ENCODE measurements at regions of chr15 and their contacts with region 1.

Region 1: DNA sequence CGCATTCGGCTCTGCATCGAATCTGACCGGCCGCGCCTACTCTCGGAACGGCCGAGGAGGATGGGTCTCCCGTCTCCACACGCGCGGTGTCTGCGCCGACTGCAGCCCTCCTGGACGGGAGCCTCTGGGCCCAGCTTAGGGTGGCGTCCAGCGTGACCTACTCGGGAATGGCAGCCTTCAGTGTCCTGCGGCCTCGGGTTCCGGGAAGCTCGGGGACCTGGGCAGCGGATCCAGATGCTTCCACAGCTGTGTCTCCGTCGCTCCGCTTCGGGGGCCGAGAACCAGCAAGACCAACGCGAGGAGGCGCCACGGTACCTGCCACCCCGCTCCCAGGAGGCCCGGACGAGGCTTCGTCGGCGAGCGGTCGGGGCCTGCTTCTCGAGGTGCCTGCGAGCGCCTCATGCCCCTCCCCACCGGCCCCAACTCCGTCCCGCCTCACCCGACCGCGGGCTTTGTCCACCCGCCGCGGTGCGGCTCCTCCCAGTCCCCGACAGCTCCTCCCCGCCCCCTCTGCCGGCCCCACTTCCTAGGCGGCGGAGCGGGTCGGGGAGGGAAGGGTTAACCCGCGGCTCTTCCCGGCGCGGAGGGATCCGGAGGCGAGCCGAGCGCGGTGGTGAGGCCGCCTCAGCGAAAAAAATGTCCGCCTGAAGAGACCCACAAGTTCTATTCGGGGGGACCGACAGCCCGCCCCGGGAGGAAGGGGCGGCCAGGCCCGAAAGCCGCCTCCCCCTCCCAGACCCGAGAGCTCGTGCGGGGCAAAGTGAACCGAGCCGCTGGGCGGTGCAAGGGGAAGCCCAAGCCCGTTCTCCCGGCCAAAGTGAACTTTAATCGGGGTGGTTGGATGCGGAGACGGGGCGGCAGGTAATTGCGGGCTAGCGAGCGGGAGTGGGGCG is at the start of gene TCF12:
- DNase-seq: peak; percentile 90
- H3K4me3 Mint-ChIP-seq: peak within 1 kb of the TSS; percentile 96
- H3K27ac Mint-ChIP-seq: peak within 1 kb of the TSS; percentile 93
- H3K4me1 Mint-ChIP-seq: peaks cover 29% of the 10 kb centered on the region
- H3K27me3 Mint-ChIP-seq: no peaks in the 10 kb centered on the region
- total RNA-seq, gene TCF12: 65.7 to 70.7 TPM

Region 2: GRCh38 chr15:56732921-56733797 is 185.1 kb before region 1 on chr15 and contains the start of gene ZNF280D:
- CTCF ChIA-PET with region 1: no interaction called
- intact Hi-C with region 1: loop called (anchors 1 kb)
- DNase-seq: peak; percentile 76
- H3K4me3 Mint-ChIP-seq: peak within 1 kb of the TSS; percentile 86
- H3K27ac Mint-ChIP-seq: peak within 1 kb of the TSS; percentile 86
- H3K4me1 Mint-ChIP-seq: peaks cover 31% of the 10 kb centered on the region
- H3K27me3 Mint-ChIP-seq: no peaks in the 10 kb centered on the region
- total RNA-seq, gene ZNF280D: 13.7 to 16.8 TPM

Region 3: DNA sequence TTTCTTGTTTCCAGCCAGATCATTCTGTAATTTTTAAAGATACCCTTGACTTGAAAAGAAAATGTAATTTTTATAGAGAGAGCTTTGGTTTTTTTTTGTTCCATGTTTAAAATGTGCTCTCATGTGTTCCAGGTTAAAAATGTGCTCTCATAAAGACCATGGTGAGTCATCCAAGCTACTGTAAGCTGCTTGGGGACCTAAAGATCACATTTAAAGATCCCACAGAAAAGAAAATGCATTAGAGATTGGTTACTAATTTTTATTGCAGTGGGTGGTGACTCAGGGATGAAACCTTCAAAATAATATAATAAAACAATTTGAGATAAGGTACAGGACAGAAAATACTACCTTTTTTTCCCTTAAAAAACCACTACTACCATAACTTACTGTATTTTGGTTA is 11.1 kb after region 1 on chr15:
- CTCF ChIA-PET with region 1: interaction called, 8 read pairs
- intact Hi-C with region 1: loop called (anchors 1 kb)
- DNase-seq: no peak
- H3K4me3 Mint-ChIP-seq: no peak overlapping the region
- H3K27ac Mint-ChIP-seq: no peak overlapping the region
- H3K4me1 Mint-ChIP-seq: peaks cover 72% of the 10 kb centered on the region
- H3K27me3 Mint-ChIP-seq: no peaks in the 10 kb centered on the region

Region 4: GRCh38 chr15:56984681-56985481 is 66.6 kb after region 1 on chr15:
- CTCF ChIA-PET with region 1: no interaction called
- intact Hi-C with region 1: loop called (anchors 2 kb)
- DNase-seq: no peak
- H3K4me3 Mint-ChIP-seq: no peak overlapping the region
- H3K27ac Mint-ChIP-seq: no peak overlapping the region
- H3K4me1 Mint-ChIP-seq: peaks cover 59% of the 10 kb centered on the region
- H3K27me3 Mint-ChIP-seq: no peaks in the 10 kb centered on the region

Region 5: GRCh38 chr15:57133127-57133968 is 215.1 kb after region 1 on chr15:
- CTCF ChIA-PET with region 1: interaction called, 3 read pairs
- intact Hi-C with region 1: loop called (anchors 5 kb)
- DNase-seq: peak; percentile 42
- H3K4me3 Mint-ChIP-seq: no peak overlapping the region
- H3K27ac Mint-ChIP-seq: no peak overlapping the region
- H3K4me1 Mint-ChIP-seq: peaks cover 45% of the 10 kb centered on the region
- H3K27me3 Mint-ChIP-seq: no peaks in the 10 kb centered on the region

Region 6: GRCh38 chr15:57306161-57306943 is 388.1 kb after region 1 on chr15:
- CTCF ChIA-PET with region 1: no interaction called
- intact Hi-C with region 1: loop called (anchors 2 kb)
- DNase-seq: peak; percentile 86
- H3K4me3 Mint-ChIP-seq: peak overlapping the region; percentile 54
- H3K27ac Mint-ChIP-seq: no peak overlapping the region
- H3K4me1 Mint-ChIP-seq: peaks cover 3% of the 10 kb centered on the region
- H3K27me3 Mint-ChIP-seq: peaks cover 7% of the 10 kb centered on the region

Measured in activated naive CD4-positive, alpha-beta T cell treated with anti-CD3 and anti-CD28 coated beads for 36 hours (primary cell).